ENCODE measurements at regions of chr9 and their contacts with region 1.

Region 1: GRCh38 chr9:89602978-89603766 is 1.6 kb upstream of the GADD45G start:
- DNase-seq: peak; percentile 94
- ATAC-seq: peak; percentile 25
- H3K4me3 Mint-ChIP-seq: peak overlapping the region; percentile 89
- H3K27ac Mint-ChIP-seq: peak overlapping the region; percentile 67
- H3K4me1 Mint-ChIP-seq: peaks cover 21% of the 10 kb centered on the region
- H3K27me3 Mint-ChIP-seq: peaks cover 17% of the 10 kb centered on the region

Region 2: DNA sequence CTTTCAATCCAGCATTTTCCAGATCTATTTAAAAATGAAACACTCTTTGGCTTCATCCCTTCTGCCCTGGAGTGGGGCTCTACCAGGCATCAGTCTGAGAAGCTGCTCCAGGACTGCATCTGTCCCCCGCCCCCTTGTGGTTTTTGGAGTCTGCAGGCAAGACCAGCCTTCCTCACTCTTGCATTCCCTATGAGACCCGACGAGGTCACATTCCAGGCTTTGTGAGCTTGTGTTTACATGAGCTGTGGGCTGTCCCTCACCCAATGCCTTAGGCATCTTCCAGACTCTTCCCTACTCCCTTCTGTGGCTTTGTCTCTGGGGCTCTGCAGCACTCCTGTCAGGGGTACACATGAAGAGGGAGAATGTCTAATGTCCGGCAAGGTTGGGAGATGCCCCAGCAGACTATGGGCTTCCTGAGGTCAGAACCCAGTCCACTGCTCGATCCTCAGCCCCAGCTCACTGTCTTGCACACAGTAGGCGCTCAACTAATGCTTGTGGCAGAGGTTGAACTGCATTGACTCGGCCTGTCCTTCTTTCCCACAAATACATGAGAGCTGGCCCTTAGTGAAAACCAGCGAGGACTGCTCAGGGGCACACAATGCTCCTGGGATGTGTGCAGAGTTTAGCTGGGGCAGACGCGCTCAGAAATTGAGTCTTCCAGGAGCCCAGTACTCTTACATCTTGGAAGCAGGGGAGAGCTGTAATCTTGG is 10.0 kb before region 1 on chr9:
- POLR2A ChIA-PET with region 1: no interaction called
- DNase-seq: no peak
- ATAC-seq: no peak
- H3K4me3 Mint-ChIP-seq: no peak overlapping the region
- H3K27ac Mint-ChIP-seq: no peak overlapping the region
- H3K4me1 Mint-ChIP-seq: no peaks in the 10 kb centered on the region
- H3K27me3 Mint-ChIP-seq: peaks cover 18% of the 10 kb centered on the region

Region 3: GRCh38 chr9:89657765-89658164 is 54.6 kb after region 1 on chr9:
- POLR2A ChIA-PET with region 1: interaction called, 15 read pairs
- DNase-seq: no peak
- ATAC-seq: peak; percentile 96
- H3K4me3 Mint-ChIP-seq: peak overlapping the region; percentile 36
- H3K27ac Mint-ChIP-seq: peak overlapping the region; percentile 49
- H3K4me1 Mint-ChIP-seq: peaks cover 34% of the 10 kb centered on the region
- H3K27me3 Mint-ChIP-seq: peaks cover 23% of the 10 kb centered on the region

Region 4: DNA sequence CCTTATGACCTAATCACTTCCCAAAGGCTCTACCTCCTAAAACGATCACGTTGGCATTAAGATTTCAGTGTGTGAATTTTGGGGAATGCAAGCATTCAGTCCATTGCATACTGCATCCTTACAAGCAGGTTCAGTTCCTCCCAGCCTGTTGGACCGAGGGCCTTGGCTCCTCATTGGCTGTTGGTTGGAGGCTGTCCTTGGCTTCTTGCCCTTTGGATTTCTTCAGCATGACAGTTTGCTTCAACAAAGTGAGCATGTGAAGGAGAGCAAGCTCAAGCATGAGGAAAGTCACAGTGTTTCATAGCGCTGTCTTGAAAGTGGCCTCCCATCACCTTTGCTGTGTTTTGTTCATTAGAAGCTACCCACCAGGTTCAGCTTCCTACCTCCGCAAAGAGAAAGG is 111.1 kb after region 1 on chr9:
- POLR2A ChIA-PET with region 1: interaction called, 10 read pairs
- DNase-seq: no peak
- ATAC-seq: no peak
- H3K4me3 Mint-ChIP-seq: peak overlapping the region; percentile 3
- H3K27ac Mint-ChIP-seq: peak overlapping the region; percentile 86
- H3K4me1 Mint-ChIP-seq: peaks cover 57% of the 10 kb centered on the region
- H3K27me3 Mint-ChIP-seq: no peaks in the 10 kb centered on the region